Left ventricle myocardium inferior (tissue), 1 donor: ENCODE measurements at regions of chr19 and their contacts with region 1.

Region 1: DNA sequence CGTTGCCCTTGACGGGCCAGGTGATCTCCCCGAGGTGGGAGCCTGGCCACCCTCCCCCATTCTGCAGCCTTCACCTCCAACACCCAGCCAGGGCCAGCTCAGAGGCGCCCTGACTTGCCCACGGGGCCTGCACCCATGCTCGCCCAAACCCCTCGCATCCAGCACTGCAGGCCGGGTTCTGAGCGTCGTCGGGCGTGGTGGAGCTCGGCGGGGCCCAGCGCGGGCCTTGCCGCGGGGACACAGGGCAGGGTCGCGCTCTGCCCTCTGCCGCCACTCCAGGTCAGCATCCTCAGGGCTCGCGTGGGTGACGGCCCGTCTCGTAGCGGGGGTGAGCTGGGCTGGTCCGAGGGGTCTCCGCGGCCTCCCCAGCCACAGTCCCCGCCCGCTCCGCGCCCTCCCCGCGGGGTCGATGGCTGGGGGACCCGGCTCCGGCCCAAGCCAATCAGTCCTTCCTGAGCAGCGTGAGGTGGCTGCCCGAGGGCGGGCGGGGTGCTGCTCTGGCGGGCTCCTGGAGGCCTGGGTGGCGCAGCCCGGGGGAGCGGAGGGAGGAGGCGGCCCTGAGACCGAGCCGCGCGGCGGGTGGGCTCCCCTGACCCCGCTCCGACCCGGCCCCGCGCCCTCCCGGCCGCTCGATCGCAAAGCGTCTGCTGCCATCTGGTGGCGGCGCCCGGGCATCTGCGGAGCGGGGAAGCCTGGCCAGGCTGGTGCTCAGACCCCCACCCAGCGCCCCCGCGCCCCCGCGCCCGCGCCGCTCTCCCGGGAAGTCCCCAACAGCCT is 61.4 kb downstream of the CCNE1 start:
- DNase-seq: peak; percentile 47
- H3K4me3 ChIP-seq: peak overlapping the region; percentile 69
- H3K27ac ChIP-seq: no peak overlapping the region
- H3K4me1 ChIP-seq: peaks cover 40% of the 10 kb centered on the region
- H3K27me3 ChIP-seq: peaks cover 63% of the 10 kb centered on the region
- CTCF ChIP-seq: peak; percentile 93

Region 2: GRCh38 chr19:29735800-29736199 is 137.4 kb before region 1 on chr19:
- intact Hi-C with region 1: loop called (anchors 10 kb)
- DNase-seq: no peak
- H3K4me3 ChIP-seq: no peak overlapping the region
- H3K27ac ChIP-seq: no peak overlapping the region
- H3K4me1 ChIP-seq: no peaks in the 10 kb centered on the region
- H3K27me3 ChIP-seq: peaks cover 62% of the 10 kb centered on the region
- CTCF ChIP-seq: no peak

Region 3: DNA sequence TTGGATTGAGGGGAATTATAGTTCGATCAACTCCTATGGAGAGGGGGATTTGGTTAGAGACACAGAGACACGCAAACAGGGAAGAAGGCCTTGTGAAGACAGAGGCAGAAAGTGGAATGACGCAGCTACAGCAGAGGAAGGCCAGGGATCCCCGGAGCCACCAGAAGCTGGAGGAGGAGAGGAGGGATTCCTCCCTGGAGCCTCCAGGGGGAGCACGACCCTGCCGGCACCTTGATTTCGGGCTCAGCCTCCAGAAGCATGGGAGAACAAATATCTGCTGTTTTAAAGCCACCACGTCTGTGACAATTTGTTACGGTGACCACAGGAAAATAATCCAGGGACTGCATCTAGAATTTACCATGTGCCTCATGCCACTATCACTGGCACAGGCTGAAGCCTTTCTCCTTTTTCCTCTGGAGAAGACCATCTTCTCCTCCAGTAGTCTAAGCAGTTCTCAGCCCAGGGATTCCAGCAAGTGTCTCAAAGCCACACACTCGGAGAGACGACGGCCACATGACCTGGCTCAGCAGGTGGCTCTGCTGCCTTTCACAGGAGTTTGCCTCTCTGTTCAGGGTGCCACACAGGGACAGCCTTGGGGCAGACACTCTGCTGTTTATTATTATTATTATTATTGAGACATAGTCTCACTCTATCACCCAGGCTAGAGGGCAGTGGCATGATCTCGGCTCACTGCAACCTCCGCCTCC is 101.4 kb before region 1 on chr19:
- intact Hi-C with region 1: loop called (anchors 5 kb)
- DNase-seq: peak; percentile 28
- H3K4me3 ChIP-seq: no peak overlapping the region
- H3K27ac ChIP-seq: no peak overlapping the region
- H3K4me1 ChIP-seq: peaks cover 3% of the 10 kb centered on the region
- H3K27me3 ChIP-seq: peaks cover 8% of the 10 kb centered on the region
- CTCF ChIP-seq: peak; percentile 82

Region 4: GRCh38 chr19:29978080-29978479 is 104.9 kb after region 1 on chr19:
- intact Hi-C with region 1: no loop called
- DNase-seq: no peak
- H3K4me3 ChIP-seq: no peak overlapping the region
- H3K27ac ChIP-seq: no peak overlapping the region
- H3K4me1 ChIP-seq: peaks cover 29% of the 10 kb centered on the region
- H3K27me3 ChIP-seq: no peaks in the 10 kb centered on the region
- CTCF ChIP-seq: no peak